Activated T-helper 2 cell treated with anti-CD3 and anti-CD28 coated beads, Interferon-gamma antibody, Interleukin-2, Interleukin-4, amounts not matched to agents 10 μg/mL and 5 μg/mL and 100 μg/mL, durations not matched to agents 14 hours and 24 hours and 36 hours (primary cell): ENCODE measurements at regions of chrX and their contacts with region 1.

Region 1: GRCh38 chrX:39261446-39262147 is 460.3 kb downstream of the MID1IP1 start:
- DNase-seq: no peak
- H3K4me3 Mint-ChIP-seq: no peak overlapping the region
- H3K27ac Mint-ChIP-seq: peak overlapping the region; percentile 75
- H3K4me1 Mint-ChIP-seq: peaks cover 40% of the 10 kb centered on the region
- H3K27me3 Mint-ChIP-seq: no peaks in the 10 kb centered on the region

Region 2: DNA sequence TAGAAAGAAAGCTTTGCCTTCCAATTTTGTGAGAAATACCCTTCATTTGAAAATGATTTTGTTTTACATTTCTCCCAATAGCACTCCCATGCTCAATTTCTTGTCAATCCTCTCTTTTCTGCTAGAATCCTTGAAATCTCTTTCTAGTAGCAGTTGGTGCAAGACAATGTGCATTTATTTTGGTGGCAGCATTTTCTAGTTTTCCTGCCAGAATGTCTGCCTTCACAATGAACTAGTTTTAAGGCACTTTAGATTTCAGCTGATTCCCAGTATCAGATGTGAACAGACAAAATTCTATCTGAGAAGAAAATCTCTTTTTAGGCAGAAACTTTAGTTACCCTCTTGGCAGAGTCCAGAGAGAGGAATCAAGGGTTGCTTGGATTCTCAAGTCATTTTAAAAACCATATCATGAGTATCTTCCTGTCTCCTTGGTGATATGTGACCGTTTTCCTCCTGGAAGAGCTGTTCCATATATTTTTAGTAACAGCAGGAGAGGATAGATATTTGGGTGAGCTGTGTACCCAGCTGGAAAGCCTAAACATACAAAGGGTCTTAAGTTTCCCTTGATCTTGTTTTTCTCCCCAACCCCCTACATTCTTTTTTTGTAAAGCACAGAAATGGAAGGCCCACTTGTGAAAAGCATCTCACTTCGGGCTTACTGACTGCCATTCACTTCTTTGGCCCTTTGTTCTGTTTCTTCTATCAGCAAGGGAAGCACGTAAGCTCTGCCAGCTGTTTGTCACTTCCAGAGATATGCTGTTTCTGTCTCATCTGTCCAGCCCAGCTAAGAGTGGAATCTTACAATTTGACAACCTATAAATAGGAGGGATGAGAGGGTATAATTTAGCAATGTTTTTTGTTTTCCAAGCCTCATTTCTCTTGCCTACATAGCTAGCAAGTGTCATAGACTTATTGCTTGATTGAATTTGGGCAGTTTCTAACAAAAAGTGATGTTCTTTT is 661.5 kb before region 1 on chrX:
- intact Hi-C with region 1: no loop called
- DNase-seq: no peak
- H3K4me3 Mint-ChIP-seq: no peak overlapping the region
- H3K27ac Mint-ChIP-seq: no peak overlapping the region
- H3K4me1 Mint-ChIP-seq: no peaks in the 10 kb centered on the region
- H3K27me3 Mint-ChIP-seq: no peaks in the 10 kb centered on the region

Region 3: GRCh38 chrX:39309018-39309635 is 47.5 kb after region 1 on chrX:
- intact Hi-C with region 1: loop called (anchors 2 kb)
- DNase-seq: no peak
- H3K4me3 Mint-ChIP-seq: no peak overlapping the region
- H3K27ac Mint-ChIP-seq: peak overlapping the region; percentile 96
- H3K4me1 Mint-ChIP-seq: peaks cover 65% of the 10 kb centered on the region
- H3K27me3 Mint-ChIP-seq: no peaks in the 10 kb centered on the region

Region 4: GRCh38 chrX:39491548-39492297 is 230.1 kb after region 1 on chrX:
- intact Hi-C with region 1: loop called (anchors 10 kb)
- DNase-seq: peak; percentile 39
- H3K4me3 Mint-ChIP-seq: peak overlapping the region; percentile 22
- H3K27ac Mint-ChIP-seq: peak overlapping the region; percentile 74
- H3K4me1 Mint-ChIP-seq: peaks cover 44% of the 10 kb centered on the region
- H3K27me3 Mint-ChIP-seq: no peaks in the 10 kb centered on the region

Region 5: DNA sequence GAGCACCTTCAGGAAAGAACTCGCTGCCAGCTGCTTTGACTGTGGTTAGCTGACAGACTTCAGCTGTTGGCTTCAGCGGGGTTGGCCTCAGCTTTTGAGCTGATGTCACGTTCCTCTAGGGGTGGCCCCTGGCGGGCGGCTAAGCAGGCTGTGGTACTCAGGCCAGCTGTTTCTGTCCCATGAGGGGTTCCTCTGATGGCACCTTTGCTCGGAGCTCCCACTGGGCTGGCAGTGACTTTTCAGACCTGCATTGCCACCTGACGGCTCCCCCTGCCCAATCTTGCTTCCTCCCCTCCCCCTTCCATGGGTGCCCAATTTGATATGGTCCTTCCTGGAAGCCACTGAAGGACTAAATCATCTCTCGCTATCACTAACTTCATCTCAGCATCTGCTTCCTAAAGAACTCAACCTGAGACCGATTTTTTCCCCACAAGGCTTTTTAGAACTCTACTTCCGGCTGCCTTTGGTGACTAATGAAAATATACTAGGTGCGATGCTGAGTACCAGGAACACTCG is 316.8 kb after region 1 on chrX:
- intact Hi-C with region 1: loop called (anchors 1 kb)
- DNase-seq: peak; percentile 31
- H3K4me3 Mint-ChIP-seq: peak overlapping the region; percentile 52
- H3K27ac Mint-ChIP-seq: peak overlapping the region; percentile 76
- H3K4me1 Mint-ChIP-seq: peaks cover 34% of the 10 kb centered on the region
- H3K27me3 Mint-ChIP-seq: no peaks in the 10 kb centered on the region